ENCODE measurements at regions of chr5 and their contacts with region 1.

Region 1: GRCh38 chr5:44048276-44048984 is 340.8 kb downstream of the FGF10 start:
- DNase-seq: no peak
- ATAC-seq: no peak
- H3K4me3 ChIP-seq: no peak overlapping the region
- H3K27ac ChIP-seq: peak overlapping the region in 1 of 4 donors; percentile 5
- H3K4me1 ChIP-seq: no peaks in the 10 kb centered on the region
- H3K27me3 ChIP-seq: no peaks in the 10 kb centered on the region
- CTCF ChIP-seq: no peak
- POLR2A ChIP-seq: no peak

Region 2: DNA sequence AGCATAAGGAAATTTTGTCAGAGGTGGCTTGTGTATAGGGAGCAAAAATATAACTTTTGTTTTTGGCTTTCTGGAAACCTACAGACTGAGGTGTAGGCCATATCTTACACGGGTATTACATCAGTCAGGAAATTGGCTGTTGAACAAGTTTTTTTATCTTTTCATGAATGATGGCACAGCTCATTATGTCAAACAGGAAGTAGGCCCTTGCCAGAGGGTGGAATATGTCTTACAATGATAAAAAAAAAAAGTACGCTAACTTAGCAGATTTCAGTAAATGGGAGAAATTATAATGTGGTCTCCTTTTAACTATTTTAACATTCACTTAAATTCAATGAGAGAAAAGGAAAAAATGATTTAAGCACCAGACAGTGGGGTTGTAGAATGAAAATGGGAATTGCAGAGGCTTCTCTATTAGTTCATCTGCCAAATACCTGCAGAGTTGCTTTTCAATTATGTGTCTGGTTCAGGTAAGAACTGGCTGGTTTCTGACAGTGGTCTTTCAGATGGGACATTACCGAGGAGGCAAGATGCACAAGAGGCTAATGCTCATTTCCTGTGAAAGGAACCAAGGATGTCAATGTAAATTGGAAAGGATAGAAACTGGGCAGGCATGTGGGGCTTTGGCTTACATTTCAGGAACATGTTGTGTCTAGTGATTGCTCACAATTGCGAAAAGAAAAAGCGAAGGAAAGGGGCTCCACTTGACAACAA is 275.5 kb before region 1 on chr5:
- in situ Hi-C with region 1: no loop called
- intact Hi-C with region 1: loop called (anchors 10 kb)
- DNase-seq: no peak
- ATAC-seq: no peak
- H3K4me3 ChIP-seq: no peak overlapping the region
- H3K27ac ChIP-seq: no peak overlapping the region
- H3K4me1 ChIP-seq: no peaks in the 10 kb centered on the region
- H3K27me3 ChIP-seq: no peaks in the 10 kb centered on the region
- CTCF ChIP-seq: no peak
- POLR2A ChIP-seq: no peak